ENCODE measurements at regions of chr2 and their contacts with region 1.

Region 1: DNA sequence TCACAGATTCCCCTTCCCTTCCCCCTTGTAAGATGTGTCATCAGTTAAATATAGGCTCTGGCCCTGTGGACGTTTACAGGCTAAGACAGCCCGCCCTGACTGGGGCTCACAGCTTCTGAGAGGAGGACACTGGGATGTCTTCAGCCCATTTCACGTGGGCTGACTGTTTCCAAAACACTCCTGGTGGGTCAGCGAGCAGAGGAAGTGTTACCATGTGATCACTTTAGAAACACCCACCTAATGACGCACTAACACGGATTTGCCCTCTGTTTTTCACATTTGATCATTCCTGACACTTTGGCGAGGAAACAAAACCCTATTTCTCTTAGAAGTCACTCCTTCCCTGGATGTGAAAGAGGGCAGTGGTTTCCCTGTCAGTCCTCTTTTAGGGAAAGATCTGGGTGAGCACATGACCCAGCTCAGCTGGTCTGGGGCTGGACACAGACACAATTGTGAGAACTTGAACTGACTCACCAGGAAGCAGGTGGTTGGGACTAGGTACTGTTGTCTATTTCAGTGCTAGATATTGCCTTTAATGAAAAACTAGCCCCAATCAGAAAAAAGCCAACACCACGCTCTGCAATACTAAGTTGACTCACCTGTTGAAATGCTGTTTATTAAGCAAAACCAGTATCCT is 38.8 kb downstream of the BMP10 start:
- DNase-seq: peak; percentile 78
- ATAC-seq: peak; percentile 69 to 77
- H3K4me3 ChIP-seq: no peak overlapping the region
- H3K27ac ChIP-seq: peak overlapping the region; percentile 83
- H3K4me1 ChIP-seq: peaks cover 74% of the 10 kb centered on the region
- H3K27me3 ChIP-seq: no peaks in the 10 kb centered on the region
- CTCF ChIP-seq: no peak

Region 2: DNA sequence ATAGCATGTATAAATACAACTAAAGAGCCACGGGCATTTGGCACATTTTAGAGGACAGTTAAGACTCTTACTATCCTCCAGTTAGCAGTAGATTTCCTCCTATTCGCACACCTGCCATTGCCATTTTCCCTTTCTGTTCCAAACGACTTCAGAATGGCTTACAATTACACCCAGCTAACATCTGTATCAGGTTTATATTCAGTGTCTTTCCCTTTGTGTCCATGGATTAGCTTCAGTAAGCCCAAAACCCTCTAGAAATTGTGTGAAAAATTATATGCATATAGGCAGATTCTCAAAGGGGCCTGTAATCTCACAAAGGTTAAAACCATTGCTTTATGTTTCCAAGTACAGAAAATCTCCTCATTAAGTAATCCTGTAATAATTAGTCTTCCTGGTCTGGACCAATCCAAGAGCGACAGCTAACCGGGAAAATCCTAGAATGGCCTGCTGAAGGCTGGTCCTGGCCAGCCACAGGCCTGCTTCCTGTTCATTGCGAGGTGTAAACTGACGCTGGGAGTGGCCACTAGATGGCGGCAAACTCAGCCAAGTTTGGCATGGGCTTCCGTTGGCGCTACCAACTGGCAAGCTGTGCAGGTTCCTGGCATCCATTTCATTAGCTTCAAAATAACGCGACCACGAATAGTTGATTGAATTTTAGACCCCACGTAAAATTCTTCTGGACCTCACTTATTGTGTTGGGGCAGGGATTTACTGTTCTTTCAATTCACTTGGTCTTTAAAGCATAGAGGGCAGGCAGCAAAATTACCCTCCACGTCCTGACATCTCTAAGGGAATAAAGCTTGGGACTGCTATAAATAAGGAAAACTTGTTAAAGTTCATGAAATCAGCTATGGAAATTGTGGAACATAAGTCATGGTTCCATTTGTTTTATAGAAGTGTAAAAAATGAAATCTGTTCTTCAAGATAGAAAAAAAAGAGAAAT is 80.7 kb before region 1 on chr2:
- intact Hi-C with region 1: loop called (anchors 10 kb)
- DNase-seq: peak; percentile 93
- ATAC-seq: peak; percentile 95 to 97
- H3K4me3 ChIP-seq: no peak overlapping the region
- H3K27ac ChIP-seq: peak overlapping the region; percentile 32
- H3K4me1 ChIP-seq: peaks cover 55% of the 10 kb centered on the region
- H3K27me3 ChIP-seq: no peaks in the 10 kb centered on the region
- CTCF ChIP-seq: peak; percentile 92

Measured in lower lobe of right lung (tissue), 2 donors.